T-cell (primary cell): ENCODE measurements at regions of chr20 and their contacts with region 1.

Region 1: GRCh38 chr20:36717657-36718056 is 28.2 kb downstream of the NDRG3 start:
- DNase-seq: peak in 7 of 35 experiments; percentile 3 to 41 (median 6)
- ATAC-seq: peak in 2 of 4 experiments; percentile 38 to 63
- H3K4me3 ChIP-seq: no peak overlapping the region
- H3K4me3 Mint-ChIP-seq: no peak overlapping the region
- H3K27ac ChIP-seq: no peak overlapping the region
- H3K27ac Mint-ChIP-seq: no peak overlapping the region
- H3K4me1 ChIP-seq: no peaks in the 10 kb centered on the region
- H3K4me1 Mint-ChIP-seq: no peaks in the 10 kb centered on the region
- H3K27me3 ChIP-seq: no peaks in the 10 kb centered on the region
- H3K27me3 Mint-ChIP-seq: no peaks in the 10 kb centered on the region

Region 2: DNA sequence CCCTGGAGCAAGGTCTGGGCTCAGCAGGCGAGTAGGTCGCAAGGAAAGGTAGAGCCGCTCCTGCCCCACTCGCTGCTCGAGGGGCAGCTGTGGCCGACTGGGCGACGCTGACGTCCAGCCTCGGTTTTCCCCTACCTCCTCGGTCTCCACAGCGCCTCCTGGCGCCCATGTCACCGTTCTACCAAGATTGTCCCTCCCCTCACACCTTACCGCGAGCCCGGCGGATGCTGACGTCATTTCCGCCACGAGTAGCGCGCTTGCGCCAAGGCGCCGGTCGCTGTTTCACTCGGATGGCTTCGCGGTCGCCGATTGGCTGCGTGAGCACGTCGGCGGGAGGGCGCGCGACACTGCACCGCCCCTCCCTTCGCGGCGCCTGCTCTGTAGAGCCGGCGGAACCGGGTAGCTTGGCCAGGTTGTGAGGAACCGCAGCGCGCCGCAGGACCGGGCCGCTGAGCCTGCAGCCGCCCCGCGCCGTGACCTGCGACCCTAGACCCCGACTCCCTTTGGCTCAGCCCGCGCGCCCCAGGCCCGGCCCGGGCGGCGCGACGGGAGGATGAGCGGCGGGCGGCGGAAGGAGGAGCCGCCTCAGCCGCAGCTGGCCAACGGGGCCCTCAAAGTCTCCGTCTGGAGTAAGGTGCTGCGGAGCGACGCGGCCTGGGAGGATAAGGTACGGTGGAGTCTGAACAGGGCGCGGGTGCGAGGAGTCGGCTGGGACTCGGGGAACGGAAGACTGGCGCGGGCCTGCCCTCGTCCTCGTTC is 112.1 kb before region 1 on chr20 and contains the start of gene RAB5IF:
- CTCF ChIA-PET with region 1: interaction called in 1 of 2 experiments, 10 read pairs
- POLR2A ChIA-PET with region 1: no interaction called
- DNase-seq: peak; percentile 97 to 100 (median 99)
- ATAC-seq: peak; percentile 91 to 94 (median 92)
- H3K4me3 ChIP-seq: peak within 1 kb of the TSS; percentile 87 to 98
- H3K4me3 Mint-ChIP-seq: peak within 1 kb of the TSS; percentile 97
- H3K27ac ChIP-seq: peak within 1 kb of the TSS; percentile 96
- H3K27ac Mint-ChIP-seq: peak within 1 kb of the TSS; percentile 96
- H3K4me1 ChIP-seq: peaks cover 9 to 38% of the 10 kb centered on the region in 2 experiments
- H3K4me1 Mint-ChIP-seq: peaks cover 29 to 38% (median 33%) of the 10 kb centered on the region in 3 donors
- H3K27me3 ChIP-seq: no peaks in the 10 kb centered on the region
- H3K27me3 Mint-ChIP-seq: peaks cover 0 to 1% of the 10 kb centered on the region in 2 donors
- total RNA-seq, gene RAB5IF: 53.6 to 72.2 (median 59.9) TPM

Region 3: DNA sequence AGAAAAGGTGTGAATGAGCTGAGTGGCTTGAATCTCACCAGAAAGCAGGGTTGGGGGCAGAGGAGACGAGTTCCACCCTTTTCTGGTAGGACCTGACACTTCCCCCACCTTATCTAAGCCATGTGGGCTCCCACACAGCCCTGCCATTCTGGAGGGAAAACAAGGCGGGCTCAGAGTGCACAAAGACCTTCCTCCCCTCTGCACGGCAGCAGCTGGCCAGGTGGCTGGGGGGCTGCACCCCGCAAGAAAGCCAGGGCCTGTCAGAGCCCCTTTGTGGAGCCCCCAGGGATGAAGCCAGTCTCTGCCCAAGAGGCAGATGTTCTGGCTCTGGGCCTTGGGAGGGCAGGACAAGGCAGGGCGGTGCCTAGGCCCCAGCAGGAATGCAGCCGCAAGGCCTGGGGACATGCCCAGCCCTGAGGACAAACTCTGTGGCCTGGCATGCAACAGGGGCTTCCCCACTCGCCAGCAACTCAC is 104.3 kb after region 1 on chr20:
- CTCF ChIA-PET with region 1: no interaction called
- POLR2A ChIA-PET with region 1: no interaction called
- DNase-seq: no peak
- ATAC-seq: no peak
- H3K4me3 ChIP-seq: no peak overlapping the region
- H3K4me3 Mint-ChIP-seq: no peak overlapping the region
- H3K27ac ChIP-seq: no peak overlapping the region
- H3K27ac Mint-ChIP-seq: no peak overlapping the region
- H3K4me1 ChIP-seq: no peaks in the 10 kb centered on the region
- H3K4me1 Mint-ChIP-seq: no peaks in the 10 kb centered on the region
- H3K27me3 ChIP-seq: peaks cover 0 to 4% of the 10 kb centered on the region in 2 experiments
- H3K27me3 Mint-ChIP-seq: no peaks in the 10 kb centered on the region

Region 4: DNA sequence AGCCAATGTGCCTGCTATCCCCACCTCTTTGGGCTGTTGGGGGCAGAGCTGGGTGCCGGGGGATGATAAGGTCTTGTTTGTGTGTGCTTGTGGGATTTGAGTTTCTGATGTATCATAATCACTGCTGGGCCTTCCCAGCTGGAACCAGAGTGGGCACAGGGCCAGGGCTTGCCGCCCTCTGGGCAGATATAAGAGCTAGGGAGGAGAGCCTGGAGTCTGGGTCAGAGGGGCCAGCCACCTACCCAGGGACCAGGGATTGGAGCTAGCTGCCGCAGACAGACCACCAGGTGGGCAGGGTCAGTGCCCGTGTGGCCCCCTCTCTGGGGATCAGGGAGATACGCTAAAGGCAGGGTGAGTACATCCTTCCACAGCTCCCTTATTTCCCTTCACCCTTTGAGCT is 155.2 kb after region 1 on chr20:
- CTCF ChIA-PET with region 1: interaction called in 1 of 2 experiments, 13 read pairs
- POLR2A ChIA-PET with region 1: no interaction called
- DNase-seq: no peak
- ATAC-seq: no peak
- H3K4me3 ChIP-seq: no peak overlapping the region
- H3K4me3 Mint-ChIP-seq: no peak overlapping the region
- H3K27ac ChIP-seq: no peak overlapping the region
- H3K27ac Mint-ChIP-seq: no peak overlapping the region
- H3K4me1 ChIP-seq: no peaks in the 10 kb centered on the region
- H3K4me1 Mint-ChIP-seq: no peaks in the 10 kb centered on the region
- H3K27me3 ChIP-seq: peaks cover 0 to 21% of the 10 kb centered on the region in 2 experiments
- H3K27me3 Mint-ChIP-seq: no peaks in the 10 kb centered on the region